Transverse colon (tissue), 4 donors: ENCODE measurements at regions of chr12 and their contacts with region 1.

Region 1: GRCh38 chr12:80485222-80485987 is 41.4 kb downstream of the PTPRQ start:
- DNase-seq: no peak
- H3K4me3 ChIP-seq: no peak overlapping the region
- H3K27ac ChIP-seq: no peak overlapping the region
- H3K4me1 ChIP-seq: no peaks in the 10 kb centered on the region
- H3K27me3 ChIP-seq: no peaks in the 10 kb centered on the region
- CTCF ChIP-seq: no peak
- EP300 ChIP-seq: no peak
- POLR2A ChIP-seq: no peak

Region 2: DNA sequence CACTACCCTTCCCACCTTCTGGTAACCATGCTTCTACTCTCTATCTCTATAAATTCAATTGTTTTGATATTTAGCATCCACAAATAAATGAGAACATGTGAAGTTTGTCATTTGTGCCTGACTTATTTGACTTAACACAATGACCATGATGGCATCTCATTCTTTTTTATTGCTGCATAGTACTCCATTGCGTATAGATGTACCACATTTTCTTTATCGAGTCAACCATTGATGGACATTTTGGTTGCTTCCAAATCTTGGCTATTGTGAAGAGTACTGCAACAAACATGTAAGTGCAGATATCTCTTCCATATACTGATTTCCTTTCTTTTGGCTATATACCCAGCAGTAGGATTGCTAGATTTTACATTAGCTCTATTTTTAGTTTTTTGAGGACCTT is 32.2 kb after region 1 on chr12:
- in situ Hi-C with region 1: no loop called
- intact Hi-C with region 1: loop called (anchors 2 kb)
- DNase-seq: no peak
- H3K4me3 ChIP-seq: no peak overlapping the region
- H3K27ac ChIP-seq: no peak overlapping the region
- H3K4me1 ChIP-seq: no peaks in the 10 kb centered on the region
- H3K27me3 ChIP-seq: no peaks in the 10 kb centered on the region
- CTCF ChIP-seq: no peak
- EP300 ChIP-seq: no peak
- POLR2A ChIP-seq: no peak

Region 3: DNA sequence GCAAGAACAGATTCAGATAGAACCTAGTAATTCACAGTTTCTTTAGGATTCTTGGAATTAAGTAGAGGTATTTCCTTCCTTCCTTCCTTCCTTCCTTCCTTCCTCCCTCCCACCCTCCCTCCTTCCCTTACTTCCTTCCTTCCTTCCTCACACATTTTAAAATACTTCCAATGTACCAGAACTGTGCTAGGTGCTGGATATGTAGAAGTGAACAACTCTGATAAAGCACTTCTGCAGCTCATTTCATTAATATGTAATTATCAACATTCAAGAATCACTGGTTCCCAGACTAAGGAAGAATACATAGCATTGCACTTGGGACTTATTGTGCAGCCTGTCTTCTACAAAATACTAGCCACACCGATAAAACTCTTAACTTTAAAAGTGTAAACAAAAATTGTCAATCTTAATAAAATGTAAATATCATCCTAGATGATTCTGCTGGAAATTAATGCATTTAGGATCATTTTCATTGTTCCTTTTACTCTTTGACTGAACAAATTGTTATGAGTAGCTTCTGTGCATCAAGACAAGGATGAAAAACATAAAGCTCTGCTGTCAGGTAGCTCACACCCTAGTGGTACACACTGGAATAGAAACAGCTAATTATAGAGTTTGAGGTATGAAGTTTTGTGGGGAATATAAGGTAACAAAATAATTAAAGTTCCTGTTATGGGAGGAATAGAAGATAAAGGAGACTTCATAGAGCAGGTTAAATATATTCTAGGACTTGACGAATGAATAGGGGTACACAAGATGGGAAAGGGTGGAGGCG is 122.1 kb after region 1 on chr12:
- in situ Hi-C with region 1: no loop called
- intact Hi-C with region 1: no loop called
- DNase-seq: no peak
- H3K4me3 ChIP-seq: no peak overlapping the region
- H3K27ac ChIP-seq: no peak overlapping the region
- H3K4me1 ChIP-seq: no peaks in the 10 kb centered on the region
- H3K27me3 ChIP-seq: no peaks in the 10 kb centered on the region
- CTCF ChIP-seq: no peak
- EP300 ChIP-seq: no peak
- POLR2A ChIP-seq: no peak